MCF 10A (cell line): ENCODE measurements at regions of chr5 and their contacts with region 1.

Region 1: DNA sequence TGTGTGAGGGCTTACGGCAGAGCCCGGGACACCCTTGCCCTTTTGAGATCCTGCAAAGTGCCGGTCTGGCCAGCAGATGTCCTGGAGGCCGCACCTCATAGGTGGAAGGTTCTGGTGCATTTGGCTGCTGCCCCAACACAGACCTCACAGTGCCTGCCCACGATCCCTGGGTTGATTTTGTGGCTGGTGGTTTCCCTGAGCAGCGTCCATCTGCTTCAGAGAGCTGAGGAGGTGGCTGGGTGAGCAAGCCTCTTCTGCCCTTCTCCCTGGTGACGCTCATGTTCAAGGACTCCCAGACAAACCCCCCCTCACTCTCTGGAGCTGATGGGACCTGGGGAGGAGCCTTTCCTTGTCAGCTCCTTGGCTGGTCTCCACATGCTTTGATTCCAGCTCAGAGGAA is 18.9 kb downstream of the BNIP1 start:
- DNase-seq: no peak
- H3K4me3 Mint-ChIP-seq: no peak overlapping the region
- H3K27ac Mint-ChIP-seq: no peak overlapping the region
- H3K4me1 Mint-ChIP-seq: no peaks in the 10 kb centered on the region
- H3K27me3 Mint-ChIP-seq: no peaks in the 10 kb centered on the region
- CTCF ChIP-seq: no peak

Region 2: DNA sequence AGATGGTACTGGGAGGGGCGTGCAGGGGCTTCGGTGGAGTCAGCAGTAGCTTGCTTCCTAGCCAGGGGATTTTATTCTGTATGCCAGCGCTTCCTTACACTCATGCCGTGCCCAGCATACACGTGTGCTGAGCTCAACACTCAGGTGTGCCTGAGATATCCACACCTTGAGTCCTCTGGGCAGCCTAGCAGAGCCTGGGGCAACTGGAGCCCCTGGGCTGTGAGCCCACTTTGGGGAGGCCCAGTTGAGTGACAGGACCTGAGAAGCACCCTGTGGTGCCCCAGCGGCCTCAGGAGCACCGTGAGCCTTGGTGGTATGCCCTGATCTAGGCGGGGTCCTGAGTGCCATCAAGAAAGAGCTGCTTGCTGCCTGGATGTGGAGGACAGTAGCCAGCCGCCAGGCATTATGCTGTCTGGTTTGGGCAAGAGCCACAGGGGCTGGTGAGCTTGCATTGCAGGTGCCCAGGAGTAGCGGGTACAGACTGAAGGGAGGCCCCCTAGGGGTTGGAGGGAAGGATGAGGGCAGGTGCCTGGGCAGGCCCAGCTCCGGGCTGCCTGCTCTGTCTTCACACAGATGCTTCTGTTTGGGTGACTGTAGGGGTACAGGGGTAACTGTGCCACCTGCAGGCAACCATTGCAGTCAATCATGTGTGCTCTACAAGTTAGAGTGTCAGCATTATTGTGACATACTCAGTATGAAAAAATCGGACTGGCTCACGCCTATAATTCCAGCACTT is 24.0 kb after region 1 on chr5:
- CTCF ChIA-PET with region 1: interaction called, 11 read pairs
- POLR2A ChIA-PET with region 1: no interaction called
- intact Hi-C with region 1: no loop called
- DNase-seq: peak; percentile 9
- H3K4me3 Mint-ChIP-seq: no peak overlapping the region
- H3K27ac Mint-ChIP-seq: no peak overlapping the region
- H3K4me1 Mint-ChIP-seq: no peaks in the 10 kb centered on the region
- H3K27me3 Mint-ChIP-seq: peaks cover 10% of the 10 kb centered on the region
- CTCF ChIP-seq: peak; percentile 18

Region 3: GRCh38 chr5:173204185-173204979 is 41.2 kb after region 1 on chr5:
- CTCF ChIA-PET with region 1: interaction called, 13 read pairs
- POLR2A ChIA-PET with region 1: interaction called, 3 read pairs
- intact Hi-C with region 1: loop called (anchors 1 kb)
- DNase-seq: peak; percentile 67
- H3K4me3 Mint-ChIP-seq: no peak overlapping the region
- H3K27ac Mint-ChIP-seq: no peak overlapping the region
- H3K4me1 Mint-ChIP-seq: peaks cover 26% of the 10 kb centered on the region
- H3K27me3 Mint-ChIP-seq: peaks cover 33% of the 10 kb centered on the region
- CTCF ChIP-seq: peak; percentile 66

Region 4: GRCh38 chr5:173283318-173284288 is 120.4 kb after region 1 on chr5:
- CTCF ChIA-PET with region 1: interaction called, 8 read pairs
- POLR2A ChIA-PET with region 1: no interaction called
- intact Hi-C with region 1: loop called (anchors 1 kb)
- DNase-seq: peak; percentile 79
- H3K4me3 Mint-ChIP-seq: peak overlapping the region; percentile 49
- H3K27ac Mint-ChIP-seq: no peak overlapping the region
- H3K4me1 Mint-ChIP-seq: peaks cover 6% of the 10 kb centered on the region
- H3K27me3 Mint-ChIP-seq: no peaks in the 10 kb centered on the region
- CTCF ChIP-seq: peak; percentile 96

Region 5: GRCh38 chr5:173660481-173661280 is 497.5 kb after region 1 on chr5:
- CTCF ChIA-PET with region 1: no interaction called
- POLR2A ChIA-PET with region 1: no interaction called
- intact Hi-C with region 1: no loop called
- DNase-seq: no peak
- H3K4me3 Mint-ChIP-seq: no peak overlapping the region
- H3K27ac Mint-ChIP-seq: no peak overlapping the region
- H3K4me1 Mint-ChIP-seq: no peaks in the 10 kb centered on the region
- H3K27me3 Mint-ChIP-seq: no peaks in the 10 kb centered on the region
- CTCF ChIP-seq: no peak

Region 6: DNA sequence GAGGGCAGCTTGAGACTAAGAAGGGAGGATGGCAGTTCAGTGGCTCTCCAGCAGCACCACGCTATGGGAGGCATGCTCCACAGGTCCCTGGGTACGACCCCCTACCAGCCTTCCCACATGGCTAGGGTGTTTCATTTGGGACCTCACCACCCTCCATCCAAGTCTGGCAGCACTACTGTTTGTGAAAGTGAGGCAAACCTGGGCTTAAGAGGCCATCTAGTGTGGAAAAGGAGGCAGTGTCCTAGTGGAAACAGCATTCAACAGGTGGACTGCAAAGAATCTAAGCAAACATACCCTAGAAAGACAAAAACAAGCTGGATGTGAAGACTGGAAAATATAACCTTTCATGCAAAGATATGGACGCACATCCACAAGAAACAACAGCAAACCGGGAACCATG is 821.0 kb after region 1 on chr5:
- CTCF ChIA-PET with region 1: interaction called, 3 read pairs
- POLR2A ChIA-PET with region 1: no interaction called
- intact Hi-C with region 1: loop called (anchors 5 kb)
- DNase-seq: peak; percentile 44
- H3K4me3 Mint-ChIP-seq: no peak overlapping the region
- H3K27ac Mint-ChIP-seq: no peak overlapping the region
- H3K4me1 Mint-ChIP-seq: no peaks in the 10 kb centered on the region
- H3K27me3 Mint-ChIP-seq: peaks cover 19% of the 10 kb centered on the region
- CTCF ChIP-seq: peak; percentile 59